ENCODE measurements at regions of chr12 and their contacts with region 1.

Region 1: DNA sequence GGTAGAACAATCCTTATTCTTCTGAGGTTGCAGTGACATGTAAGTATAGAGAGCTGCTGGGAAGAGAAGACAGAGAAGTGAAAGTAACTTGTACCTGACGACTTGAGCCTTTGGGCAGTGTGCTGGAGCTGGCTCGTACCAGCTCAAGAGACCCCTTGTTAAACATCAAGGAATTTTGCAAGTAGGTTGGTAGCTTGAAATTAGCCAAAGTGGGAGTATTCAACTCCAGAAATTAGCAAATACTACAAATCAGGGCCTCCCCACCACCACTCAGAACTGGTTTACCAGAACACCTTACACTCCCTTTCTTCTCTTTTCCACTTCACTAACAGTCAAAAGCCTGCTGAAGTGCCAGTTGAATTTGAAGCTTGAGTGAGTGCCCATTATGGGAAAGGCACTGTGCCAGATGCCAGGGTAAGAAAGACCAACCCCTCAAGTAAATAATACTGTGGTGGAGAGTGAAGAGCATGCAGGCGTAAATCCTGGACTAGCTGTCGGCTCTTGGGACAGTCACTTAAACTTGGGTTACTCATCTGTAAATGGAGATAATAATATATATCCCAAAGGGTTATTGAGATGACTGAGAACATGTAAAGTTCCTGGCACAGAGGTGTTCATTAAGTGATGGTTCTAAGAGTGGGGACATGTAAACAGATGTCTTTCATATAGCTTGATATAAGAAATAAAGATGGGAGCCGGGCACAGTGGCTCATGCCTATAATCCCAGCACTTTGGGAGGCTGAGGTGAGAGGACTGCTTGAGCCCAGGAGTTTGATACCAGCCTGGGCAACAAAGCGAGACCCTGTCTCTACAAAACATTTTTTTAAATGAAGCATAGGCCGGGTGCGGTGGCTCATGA is 27.0 kb upstream of the EID3 start:
- DNase-seq: no peak
- H3K27ac ChIP-seq: no peak overlapping the region
- CTCF ChIP-seq: no peak

Region 2: GRCh38 chr12:104263580-104264358 is 12.7 kb before region 1 on chr12:
- CTCF ChIA-PET with region 1: interaction called, 13 read pairs
- POLR2A ChIA-PET with region 1: no interaction called
- DNase-seq: peak; percentile 70
- H3K27ac ChIP-seq: peak overlapping the region; percentile 60
- CTCF ChIP-seq: no peak

Measured in RWPE1 (cell line).